ENCODE measurements at regions of chr1 and their contacts with region 1.

Region 1: GRCh38 chr1:51768971-51769588 is 109.4 kb downstream of the NRDC start:
- DNase-seq: peak; percentile 37
- H3K4me3 ChIP-seq: no peak overlapping the region
- H3K27ac ChIP-seq: no peak overlapping the region
- H3K4me1 ChIP-seq: no peaks in the 10 kb centered on the region
- H3K27me3 ChIP-seq: no peaks in the 10 kb centered on the region
- CTCF ChIP-seq: peak; percentile 73 to 78

Region 2: GRCh38 chr1:51661081-51661518 is 108.0 kb before region 1 on chr1:
- CTCF ChIA-PET with region 1: no interaction called
- dilution Hi-C with region 1: no loop called
- in situ Hi-C with region 1: no loop called
- intact Hi-C with region 1: loop called (anchors 1 kb)
- DNase-seq: peak; percentile 83
- H3K4me3 ChIP-seq: peak overlapping the region in 2 of 3 experiments; percentile 4 to 12
- H3K27ac ChIP-seq: peak overlapping the region; percentile 22
- H3K4me1 ChIP-seq: peaks cover 16% of the 10 kb centered on the region
- H3K27me3 ChIP-seq: no peaks in the 10 kb centered on the region
- CTCF ChIP-seq: no peak

Region 3: GRCh38 chr1:51792864-51793263 is 23.8 kb after region 1 on chr1:
- CTCF ChIA-PET with region 1: no interaction called
- dilution Hi-C with region 1: no loop called
- in situ Hi-C with region 1: no loop called
- intact Hi-C with region 1: no loop called
- DNase-seq: peak; percentile 44
- H3K4me3 ChIP-seq: no peak overlapping the region
- H3K27ac ChIP-seq: no peak overlapping the region
- H3K4me1 ChIP-seq: no peaks in the 10 kb centered on the region
- H3K27me3 ChIP-seq: no peaks in the 10 kb centered on the region
- CTCF ChIP-seq: no peak

Region 4: DNA sequence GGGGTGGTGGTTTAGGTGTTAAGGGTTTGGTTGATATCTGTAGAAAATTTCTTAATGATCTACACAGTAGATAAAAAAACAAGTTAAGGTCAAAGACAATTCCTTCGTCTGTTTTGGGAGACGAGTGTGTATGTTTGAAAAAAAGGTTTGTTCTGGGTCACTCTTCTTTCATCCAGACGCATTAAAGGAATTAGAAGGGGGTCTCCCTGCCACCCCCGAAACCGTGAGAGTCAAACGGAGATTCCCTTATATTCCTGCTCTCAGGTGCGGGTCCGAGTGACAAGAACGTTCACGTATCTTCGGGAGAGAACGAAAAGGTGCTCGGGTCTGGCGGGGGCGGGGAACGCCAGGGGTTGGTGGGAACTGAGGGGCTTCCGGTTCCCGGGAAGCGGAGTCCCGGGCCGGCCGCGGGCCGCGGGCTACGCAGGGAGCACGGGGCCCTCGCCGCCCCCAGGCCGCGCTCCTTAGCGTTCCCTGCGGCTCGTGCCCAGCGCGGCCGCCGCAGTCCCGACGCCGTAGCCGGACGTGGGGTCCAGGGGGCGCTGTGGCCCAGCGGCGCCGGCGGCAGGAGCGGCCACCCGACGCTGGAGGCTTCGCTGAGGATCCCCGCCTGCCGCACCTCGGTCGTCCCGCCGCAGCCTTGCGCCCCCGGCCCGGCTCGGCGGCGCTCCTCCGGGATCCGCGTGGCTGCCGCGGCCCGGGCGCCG is 372.6 kb after region 1 on chr1 and contains the start of gene ZFYVE9:
- CTCF ChIA-PET with region 1: no interaction called
- dilution Hi-C with region 1: no loop called
- in situ Hi-C with region 1: no loop called
- intact Hi-C with region 1: no loop called
- DNase-seq: peak; percentile 76
- H3K4me3 ChIP-seq: peak within 1 kb of the TSS; percentile 84 to 95 (median 94)
- H3K27ac ChIP-seq: peak within 1 kb of the TSS; percentile 95
- H3K4me1 ChIP-seq: peaks cover 33% of the 10 kb centered on the region
- H3K27me3 ChIP-seq: no peaks in the 10 kb centered on the region
- CTCF ChIP-seq: peak; percentile 61 to 65
- total RNA-seq, gene ZFYVE9: 35.4 to 42.0 TPM